ENCODE measurements at regions of chr12 and their contacts with region 1.

Region 1: DNA sequence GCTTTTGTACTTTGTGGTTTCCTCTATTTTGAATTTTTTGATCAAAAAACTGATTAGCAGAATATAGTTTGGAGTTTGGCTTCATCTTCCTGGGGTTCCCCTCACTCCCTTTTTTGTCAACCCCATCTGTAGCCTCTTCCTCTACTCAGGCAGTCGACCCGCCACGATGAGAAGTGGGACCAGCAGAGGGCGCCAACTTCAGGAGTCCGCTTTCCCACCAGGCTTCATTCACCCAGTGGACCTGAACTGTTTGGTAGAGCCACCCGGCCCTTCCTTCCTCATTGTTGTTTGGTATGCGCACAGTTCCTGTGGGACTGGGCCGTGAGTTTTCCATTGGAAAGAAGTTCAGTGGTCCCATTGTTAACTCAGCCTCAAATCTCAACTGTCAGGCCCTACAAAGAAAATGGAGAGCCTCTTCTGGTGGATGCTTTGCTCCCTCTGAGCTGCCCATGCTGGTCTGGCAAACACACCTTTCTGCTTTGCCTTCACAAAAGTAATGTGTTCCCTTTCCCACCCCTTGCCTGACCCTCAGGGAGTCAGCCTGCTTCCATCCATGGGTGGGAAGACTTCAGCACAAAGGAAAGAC is 21.7 kb downstream of the TMBIM6 start:
- DNase-seq: peak; percentile 46 to 89 (median 74)
- ATAC-seq: peak; percentile 69 to 84 (median 77)
- H3K4me3 ChIP-seq: peak overlapping the region in 1 of 2 donors; percentile 49
- H3K4me3 Mint-ChIP-seq: peak overlapping the region in 2 of 3 donors; percentile 39 to 48
- H3K27ac ChIP-seq: peak overlapping the region; percentile 59
- H3K27ac Mint-ChIP-seq: peak overlapping the region; percentile 86 to 90
- H3K4me1 ChIP-seq: peaks cover 23 to 41% of the 10 kb centered on the region in 2 experiments
- H3K4me1 Mint-ChIP-seq: peaks cover 57 to 65% (median 63%) of the 10 kb centered on the region in 3 donors
- H3K27me3 ChIP-seq: no peaks in the 10 kb centered on the region
- H3K27me3 Mint-ChIP-seq: no peaks in the 10 kb centered on the region

Region 2: DNA sequence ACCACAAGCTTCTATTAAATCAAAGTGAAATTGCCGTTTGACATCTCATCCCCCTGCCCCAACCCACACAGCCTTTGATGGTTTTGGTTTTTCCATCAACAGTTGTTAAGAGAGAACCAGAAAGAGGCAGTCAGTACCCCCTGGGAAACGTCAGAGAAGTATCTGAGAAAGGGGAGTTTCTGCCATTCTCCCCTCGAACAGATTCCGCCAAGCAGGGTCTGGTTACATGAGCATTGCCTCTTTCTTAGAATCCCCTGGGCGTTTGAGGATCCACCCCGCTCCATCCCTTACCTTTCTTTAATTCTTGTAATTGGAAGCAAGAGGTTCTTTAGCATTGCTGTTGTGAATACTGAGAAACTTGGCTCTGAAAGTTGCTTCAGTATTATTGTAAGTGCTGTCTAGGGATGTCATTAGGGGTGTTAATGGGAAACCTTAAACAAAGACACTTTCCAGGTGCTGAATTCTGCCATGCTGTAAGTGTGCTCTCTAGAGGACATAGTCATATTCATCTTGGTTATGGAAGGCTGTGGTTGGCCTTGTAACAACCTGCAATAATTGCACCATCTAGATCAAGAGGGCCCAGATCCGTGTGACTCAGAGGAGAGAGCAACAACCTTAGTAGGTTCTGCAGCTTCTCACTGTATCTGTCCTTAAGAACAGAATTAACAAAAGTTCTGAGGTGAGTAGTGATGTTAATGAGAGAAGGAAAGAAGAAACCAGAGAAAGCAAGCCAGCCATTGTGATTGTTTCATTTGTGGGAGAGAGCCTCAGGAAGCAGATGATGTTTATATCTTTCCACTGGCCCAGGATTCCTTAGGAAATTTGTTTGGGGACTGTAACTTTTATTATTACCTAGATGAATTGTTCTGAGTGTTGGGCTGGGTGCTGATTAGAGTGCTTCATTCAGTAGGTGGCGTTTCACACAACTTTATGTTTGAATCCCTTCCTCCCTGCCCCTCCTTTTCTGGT is 12.8 kb before region 1 on chr12:
- CTCF ChIA-PET with region 1: interaction called, 4 to 15 read pairs
- POLR2A ChIA-PET with region 1: interaction called, 4 to 5 read pairs
- DNase-seq: peak in 10 of 35 experiments; percentile 2 to 45 (median 14)
- ATAC-seq: peak; percentile 63 to 84 (median 72)
- H3K4me3 ChIP-seq: no peak overlapping the region
- H3K4me3 Mint-ChIP-seq: peak overlapping the region; percentile 43 to 67 (median 43)
- H3K27ac ChIP-seq: peak overlapping the region; percentile 14
- H3K27ac Mint-ChIP-seq: peak overlapping the region; percentile 69 to 79
- H3K4me1 ChIP-seq: peaks cover 39 to 44% of the 10 kb centered on the region in 2 experiments
- H3K4me1 Mint-ChIP-seq: peaks cover 84 to 95% (median 88%) of the 10 kb centered on the region in 3 donors
- H3K27me3 ChIP-seq: no peaks in the 10 kb centered on the region
- H3K27me3 Mint-ChIP-seq: no peaks in the 10 kb centered on the region

Region 3: GRCh38 chr12:49787672-49788071 is 24.6 kb after region 1 on chr12:
- CTCF ChIA-PET with region 1: no interaction called
- POLR2A ChIA-PET with region 1: no interaction called
- DNase-seq: no peak
- ATAC-seq: no peak
- H3K4me3 ChIP-seq: no peak overlapping the region
- H3K4me3 Mint-ChIP-seq: no peak overlapping the region
- H3K27ac ChIP-seq: no peak overlapping the region
- H3K27ac Mint-ChIP-seq: no peak overlapping the region
- H3K4me1 ChIP-seq: no peaks in the 10 kb centered on the region
- H3K4me1 Mint-ChIP-seq: no peaks in the 10 kb centered on the region
- H3K27me3 ChIP-seq: peaks cover 0 to 5% of the 10 kb centered on the region in 2 experiments
- H3K27me3 Mint-ChIP-seq: peaks cover 11 to 13% of the 10 kb centered on the region in 2 donors

Region 4: DNA sequence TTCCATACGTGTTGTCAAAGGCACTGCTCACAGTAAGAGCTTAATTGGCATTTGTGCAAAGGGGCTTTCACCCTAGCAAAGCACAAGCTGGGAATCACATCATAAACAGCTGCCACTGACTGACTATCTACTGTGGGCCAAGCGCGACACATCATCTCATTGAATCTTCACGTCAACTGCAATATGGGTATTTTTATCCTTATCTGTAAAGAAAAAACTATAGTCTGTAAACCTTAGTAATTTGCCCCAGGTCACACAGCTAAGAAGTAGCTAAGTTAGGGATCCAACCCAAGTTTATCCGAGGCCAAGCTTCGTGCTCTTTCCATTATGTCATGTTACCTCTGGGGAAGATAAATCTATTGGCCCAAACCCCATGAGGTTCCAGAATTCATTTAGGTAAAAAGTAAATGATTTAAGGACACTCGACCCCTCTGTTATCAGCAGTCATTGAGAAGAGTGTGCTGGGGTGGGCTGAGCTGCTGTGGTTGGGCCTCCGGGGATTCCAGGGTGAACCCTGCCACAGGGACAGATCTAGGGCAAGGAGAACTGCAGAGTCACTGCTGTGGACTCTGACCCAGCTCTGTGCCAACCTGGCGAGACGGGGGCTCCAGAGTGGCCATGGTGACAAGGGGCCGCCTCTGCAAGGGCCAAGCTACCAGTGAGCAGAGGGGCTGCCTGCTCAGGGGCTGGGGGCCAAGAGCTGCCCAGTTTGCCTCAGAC is 37.5 kb after region 1 on chr12:
- CTCF ChIA-PET with region 1: no interaction called
- POLR2A ChIA-PET with region 1: no interaction called
- DNase-seq: no peak
- ATAC-seq: no peak
- H3K4me3 ChIP-seq: no peak overlapping the region
- H3K4me3 Mint-ChIP-seq: no peak overlapping the region
- H3K27ac ChIP-seq: no peak overlapping the region
- H3K27ac Mint-ChIP-seq: no peak overlapping the region
- H3K4me1 ChIP-seq: no peaks in the 10 kb centered on the region
- H3K4me1 Mint-ChIP-seq: no peaks in the 10 kb centered on the region
- H3K27me3 ChIP-seq: no peaks in the 10 kb centered on the region
- H3K27me3 Mint-ChIP-seq: no peaks in the 10 kb centered on the region

Region 5: GRCh38 chr12:49842519-49843352 is 79.6 kb after region 1 on chr12 and contains the start of gene BCDIN3D:
- CTCF ChIA-PET with region 1: interaction called, 7 to 10 read pairs
- POLR2A ChIA-PET with region 1: no interaction called
- DNase-seq: peak; percentile 82 to 95 (median 89)
- ATAC-seq: peak; percentile 94 to 97 (median 96)
- H3K4me3 ChIP-seq: peak within 1 kb of the TSS; percentile 81 to 98
- H3K4me3 Mint-ChIP-seq: peak within 1 kb of the TSS; percentile 87 to 94 (median 89)
- H3K27ac ChIP-seq: peak within 1 kb of the TSS; percentile 90
- H3K27ac Mint-ChIP-seq: peak within 1 kb of the TSS; percentile 92
- H3K4me1 ChIP-seq: peaks cover 6 to 30% of the 10 kb centered on the region in 2 experiments
- H3K4me1 Mint-ChIP-seq: peaks cover 37 to 43% (median 40%) of the 10 kb centered on the region in 3 donors
- H3K27me3 ChIP-seq: no peaks in the 10 kb centered on the region
- H3K27me3 Mint-ChIP-seq: peaks cover 0 to 3% of the 10 kb centered on the region in 2 donors
- total RNA-seq, gene BCDIN3D: 4.7 to 12.8 (median 12.3) TPM